ENCODE measurements at regions of chr5 and their contacts with region 1.

Region 1: GRCh38 chr5:119411935-119412602 is 40.2 kb upstream of the HSD17B4 start:
- DNase-seq: peak; percentile 35
- ATAC-seq: peak; percentile 92 to 95

Region 2: DNA sequence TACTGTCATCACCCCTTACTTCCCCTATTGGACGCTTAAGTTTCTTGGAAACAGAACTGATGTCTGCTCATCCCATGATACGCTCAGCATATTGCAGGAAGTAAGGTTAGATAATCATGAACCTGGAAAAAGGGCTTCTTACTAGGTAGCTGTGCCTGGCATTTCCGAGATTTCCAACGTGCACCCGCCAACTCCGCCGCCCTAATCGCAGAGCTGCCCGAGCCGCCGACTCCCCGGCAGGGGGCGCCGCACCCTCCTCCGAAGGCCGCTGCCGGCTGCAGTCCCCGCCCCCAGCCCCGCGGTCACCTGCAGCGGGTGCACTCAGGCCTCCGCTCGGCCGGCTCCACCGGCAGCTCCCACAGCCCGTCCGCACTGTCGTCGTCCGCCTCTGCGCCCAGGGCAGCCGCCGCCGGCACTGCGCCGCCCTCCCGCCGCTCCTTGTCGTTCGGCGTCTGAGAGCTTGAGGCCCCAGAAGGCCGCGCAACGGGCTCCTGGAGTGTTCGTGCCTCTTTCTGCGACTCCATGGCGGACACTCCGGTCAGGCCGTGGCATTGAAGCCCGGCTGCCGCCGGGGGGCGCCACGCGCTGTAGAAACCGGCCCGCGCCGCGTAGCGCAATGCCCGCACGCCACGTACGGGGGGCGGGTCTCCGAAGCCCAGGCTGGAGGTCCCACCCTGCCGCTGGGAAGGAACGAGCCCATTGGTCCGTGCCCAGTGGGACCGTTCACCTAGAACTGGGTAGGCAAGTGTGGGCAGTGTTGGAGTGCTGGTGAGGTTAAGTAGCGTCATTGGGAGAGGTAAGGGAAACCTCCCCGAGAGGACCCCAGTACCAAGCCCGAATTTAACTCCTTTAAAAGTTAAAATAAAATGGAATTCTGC is 423.8 kb before region 1 on chr5 and contains the start of gene DTWD2:
- intact Hi-C with region 1: loop called (anchors 2 to 5 kb)
- DNase-seq: peak; percentile 96
- ATAC-seq: peak; percentile 97 to 99
- total RNA-seq, gene DTWD2: 8.4 to 10.5 TPM

Region 3: GRCh38 chr5:119129770-119130169 is 282.3 kb before region 1 on chr5:
- intact Hi-C with region 1: no loop called
- DNase-seq: no peak
- ATAC-seq: no peak

Region 4: GRCh38 chr5:119267958-119268386 is 144.1 kb before region 1 on chr5:
- intact Hi-C with region 1: loop called in 1 of 2 experiments (anchors 10 kb)
- DNase-seq: peak; percentile 95
- ATAC-seq: peak; percentile 91 to 94

Region 5: DNA sequence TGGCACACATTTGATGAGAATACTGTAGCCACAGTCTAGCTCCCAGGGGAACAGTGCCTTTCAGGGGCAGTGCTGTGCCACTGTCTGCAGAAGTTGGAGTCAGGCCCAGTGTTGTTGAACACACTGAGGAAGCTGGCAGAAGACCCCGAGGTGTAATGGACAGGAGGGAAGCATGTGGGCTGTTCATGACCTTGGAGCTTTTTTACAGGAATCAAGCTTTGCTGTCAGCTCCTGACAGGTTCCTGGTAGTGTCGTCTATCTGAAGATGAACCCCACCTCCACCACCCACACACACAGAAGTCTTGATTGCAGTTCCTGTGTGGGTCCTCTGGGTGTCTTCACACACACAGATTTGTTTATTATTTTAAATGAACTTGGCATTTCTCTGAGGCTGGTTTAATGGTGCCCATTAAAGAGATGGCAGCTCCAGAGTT is 96.5 kb before region 1 on chr5:
- intact Hi-C with region 1: loop called in 1 of 2 experiments (anchors 2 kb)
- DNase-seq: no peak
- ATAC-seq: peak; percentile 77 to 83

Measured in left cardiac atrium (tissue), 4 donors.